Activated CD8-positive, alpha-beta memory T cell treated with anti-CD3 and anti-CD28 coated beads, Interleukin-2, amount 10 ng/mL, durations not matched to agents 7 days and 5 days (primary cell): ENCODE measurements at regions of chr5 and their contacts with region 1.

Region 1: GRCh38 chr5:148730943-148731861 is 76.9 kb upstream of the HTR4 start:
- DNase-seq: peak; percentile 85
- ATAC-seq: peak; percentile 95
- H3K4me3 Mint-ChIP-seq: peak overlapping the region; percentile 78
- H3K27ac Mint-ChIP-seq: peak overlapping the region; percentile 93
- H3K4me1 Mint-ChIP-seq: peaks cover 21% of the 10 kb centered on the region
- H3K27me3 Mint-ChIP-seq: peaks cover 5% of the 10 kb centered on the region

Region 2: GRCh38 chr5:147822686-147823491 is 908.3 kb before region 1 on chr5:
- CTCF ChIA-PET with region 1: no interaction called
- DNase-seq: peak; percentile 55
- ATAC-seq: peak; percentile 80
- H3K4me3 Mint-ChIP-seq: no peak overlapping the region
- H3K27ac Mint-ChIP-seq: no peak overlapping the region
- H3K4me1 Mint-ChIP-seq: peaks cover 2% of the 10 kb centered on the region
- H3K27me3 Mint-ChIP-seq: peaks cover 3% of the 10 kb centered on the region

Region 3: GRCh38 chr5:148443998-148444397 is 287.2 kb before region 1 on chr5:
- CTCF ChIA-PET with region 1: interaction called, 73 read pairs
- DNase-seq: peak; percentile 52
- ATAC-seq: peak; percentile 74
- H3K4me3 Mint-ChIP-seq: no peak overlapping the region
- H3K27ac Mint-ChIP-seq: no peak overlapping the region
- H3K4me1 Mint-ChIP-seq: no peaks in the 10 kb centered on the region
- H3K27me3 Mint-ChIP-seq: no peaks in the 10 kb centered on the region

Region 4: GRCh38 chr5:148620696-148621095 is 110.5 kb before region 1 on chr5:
- CTCF ChIA-PET with region 1: no interaction called
- DNase-seq: peak; percentile 65
- ATAC-seq: peak; percentile 96
- H3K4me3 Mint-ChIP-seq: no peak overlapping the region
- H3K27ac Mint-ChIP-seq: no peak overlapping the region
- H3K4me1 Mint-ChIP-seq: peaks cover 24% of the 10 kb centered on the region
- H3K27me3 Mint-ChIP-seq: peaks cover 31% of the 10 kb centered on the region

Region 5: DNA sequence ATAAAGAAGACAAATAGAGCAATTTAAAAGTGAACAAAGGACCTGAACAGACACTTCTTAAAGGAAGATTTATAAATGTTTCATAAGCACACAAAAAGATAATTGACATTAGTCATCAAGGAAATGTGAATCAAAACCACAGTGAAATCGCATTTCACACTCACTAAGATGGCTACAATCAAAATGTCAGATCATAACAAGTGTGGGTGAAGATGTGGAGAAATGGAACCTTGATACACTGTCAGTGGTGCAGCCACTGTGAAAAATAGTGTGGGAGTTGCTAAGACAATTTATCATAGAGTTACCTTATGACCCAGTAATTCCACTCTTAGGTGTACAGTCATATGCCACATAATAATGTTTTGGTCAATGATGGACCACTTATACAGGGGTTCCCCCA is 22.3 kb before region 1 on chr5:
- CTCF ChIA-PET with region 1: interaction called, 12 read pairs
- DNase-seq: no peak
- ATAC-seq: peak; percentile 58
- H3K4me3 Mint-ChIP-seq: no peak overlapping the region
- H3K27ac Mint-ChIP-seq: no peak overlapping the region
- H3K4me1 Mint-ChIP-seq: peaks cover 12% of the 10 kb centered on the region
- H3K27me3 Mint-ChIP-seq: peaks cover 9% of the 10 kb centered on the region

Region 6: GRCh38 chr5:148939676-148940075 is 208.5 kb after region 1 on chr5:
- CTCF ChIA-PET with region 1: no interaction called
- DNase-seq: no peak
- ATAC-seq: no peak
- H3K4me3 Mint-ChIP-seq: no peak overlapping the region
- H3K27ac Mint-ChIP-seq: no peak overlapping the region
- H3K4me1 Mint-ChIP-seq: no peaks in the 10 kb centered on the region
- H3K27me3 Mint-ChIP-seq: peaks cover 2% of the 10 kb centered on the region

Region 7: DNA sequence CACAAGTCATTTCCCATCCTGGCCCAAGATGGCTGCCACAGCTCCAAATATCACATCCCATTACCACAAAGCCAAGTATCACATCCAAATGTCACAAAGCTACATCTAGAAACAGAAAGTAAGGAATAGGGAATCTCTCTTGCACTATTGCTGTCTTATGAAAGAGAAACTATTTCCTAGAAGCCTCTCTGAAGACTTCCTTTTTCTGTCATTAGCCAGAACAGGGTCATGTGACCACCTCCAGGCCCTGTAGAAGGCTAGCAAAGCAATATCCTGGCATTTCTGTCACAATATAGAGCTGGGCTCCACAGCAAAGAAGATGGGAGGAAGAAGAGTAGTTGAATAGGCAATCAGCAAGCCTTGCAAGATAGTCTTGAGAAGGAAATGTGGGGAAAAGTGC is 232.5 kb after region 1 on chr5:
- CTCF ChIA-PET with region 1: interaction called, 65 read pairs
- DNase-seq: no peak
- ATAC-seq: peak; percentile 76
- H3K4me3 Mint-ChIP-seq: no peak overlapping the region
- H3K27ac Mint-ChIP-seq: peak overlapping the region; percentile 59
- H3K4me1 Mint-ChIP-seq: peaks cover 7% of the 10 kb centered on the region
- H3K27me3 Mint-ChIP-seq: no peaks in the 10 kb centered on the region

Region 8: GRCh38 chr5:149035372-149035790 is 304.2 kb after region 1 on chr5:
- CTCF ChIA-PET with region 1: interaction called, 227 read pairs
- DNase-seq: peak; percentile 84
- ATAC-seq: peak; percentile 92
- H3K4me3 Mint-ChIP-seq: no peak overlapping the region
- H3K27ac Mint-ChIP-seq: no peak overlapping the region
- H3K4me1 Mint-ChIP-seq: peaks cover 23% of the 10 kb centered on the region
- H3K27me3 Mint-ChIP-seq: peaks cover 11% of the 10 kb centered on the region